Activated naive CD4-positive, alpha-beta T cell treated with anti-CD3 and anti-CD28 coated beads for 36 hours (primary cell): ENCODE measurements at regions of chr3 and their contacts with region 1.

Region 1: GRCh38 chr3:132641837-132642538 is 17.6 kb downstream of the ACAD11 start:
- DNase-seq: no peak
- H3K4me3 Mint-ChIP-seq: no peak overlapping the region
- H3K27ac Mint-ChIP-seq: no peak overlapping the region
- H3K4me1 Mint-ChIP-seq: peaks cover 3% of the 10 kb centered on the region
- H3K27me3 Mint-ChIP-seq: no peaks in the 10 kb centered on the region

Region 2: GRCh38 chr3:132535575-132536441 is 106.2 kb before region 1 on chr3:
- CTCF ChIA-PET with region 1: interaction called, 98 read pairs
- intact Hi-C with region 1: loop called (anchors 1 kb)
- DNase-seq: peak; percentile 71
- H3K4me3 Mint-ChIP-seq: no peak overlapping the region
- H3K27ac Mint-ChIP-seq: no peak overlapping the region
- H3K4me1 Mint-ChIP-seq: no peaks in the 10 kb centered on the region
- H3K27me3 Mint-ChIP-seq: no peaks in the 10 kb centered on the region